MCF 10A (cell line): ENCODE measurements at regions of chr12 and their contacts with region 1.

Region 1: DNA sequence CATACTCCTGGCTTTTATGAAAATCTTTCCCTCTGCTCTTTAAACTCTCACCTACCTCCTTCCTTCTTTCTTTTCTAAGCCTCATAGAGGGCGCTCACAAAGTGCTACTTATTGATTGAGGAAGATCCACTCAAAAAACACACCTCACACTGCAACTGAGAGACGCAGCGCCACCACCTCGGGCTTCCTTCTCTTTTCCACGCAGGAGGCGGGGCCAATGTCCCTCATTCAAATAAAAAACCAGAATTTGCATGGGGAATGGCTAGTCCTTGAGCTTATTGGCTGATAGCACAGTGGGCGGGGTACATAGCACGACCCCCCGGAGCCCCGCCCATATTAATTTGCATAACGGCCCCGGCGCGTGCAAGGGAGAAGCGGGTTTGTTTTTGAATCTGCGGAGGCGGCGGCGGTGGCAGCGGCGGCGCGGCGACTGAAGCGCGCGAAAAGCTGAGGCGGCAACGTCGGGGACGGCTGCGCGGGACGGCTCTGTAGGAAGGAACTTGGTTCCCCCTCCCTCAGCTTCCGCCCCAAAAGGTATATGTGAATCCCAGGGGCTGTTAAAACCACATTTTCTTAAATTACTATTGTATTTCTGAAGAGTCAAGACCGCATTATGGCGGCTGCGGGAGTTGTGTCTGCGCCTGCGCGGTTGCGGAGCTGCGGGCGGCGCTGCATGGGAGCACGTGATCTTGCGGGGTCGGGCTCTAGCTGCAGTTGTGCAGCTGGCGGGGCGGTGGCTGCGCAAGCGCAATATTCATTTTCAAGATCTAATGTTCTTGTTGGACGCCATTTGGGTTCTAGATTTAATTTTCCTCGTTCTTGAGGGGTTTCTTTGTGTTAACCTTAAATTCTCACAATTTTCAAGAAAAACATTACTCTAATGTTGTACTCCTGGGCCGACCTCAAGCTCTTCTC is at the start of gene ATF7IP:
- DNase-seq: peak; percentile 96
- H3K4me3 Mint-ChIP-seq: peak within 1 kb of the TSS; percentile 69
- H3K27ac Mint-ChIP-seq: peak within 1 kb of the TSS; percentile 69
- H3K4me1 Mint-ChIP-seq: no peaks in the 10 kb centered on the region
- H3K27me3 Mint-ChIP-seq: no peaks in the 10 kb centered on the region
- CTCF ChIP-seq: no peak
- total RNA-seq, gene ATF7IP: 29.4 and 33.1 TPM in 2 replicates

Region 2: GRCh38 chr12:14239350-14239934 is 126.1 kb before region 1 on chr12:
- CTCF ChIA-PET with region 1: interaction called, 22 read pairs
- POLR2A ChIA-PET with region 1: interaction called, 31 read pairs
- intact Hi-C with region 1: loop called (anchors 1 kb)
- DNase-seq: no peak
- H3K4me3 Mint-ChIP-seq: no peak overlapping the region
- H3K27ac Mint-ChIP-seq: no peak overlapping the region
- H3K4me1 Mint-ChIP-seq: peaks cover 11% of the 10 kb centered on the region
- H3K27me3 Mint-ChIP-seq: no peaks in the 10 kb centered on the region
- CTCF ChIP-seq: no peak

Region 3: GRCh38 chr12:14272956-14273907 is 92.3 kb before region 1 on chr12:
- CTCF ChIA-PET with region 1: interaction called, 10 read pairs
- POLR2A ChIA-PET with region 1: interaction called, 28 read pairs
- intact Hi-C with region 1: no loop called
- DNase-seq: peak; percentile 94
- H3K4me3 Mint-ChIP-seq: peak overlapping the region; percentile 4
- H3K27ac Mint-ChIP-seq: peak overlapping the region; percentile 86
- H3K4me1 Mint-ChIP-seq: peaks cover 14% of the 10 kb centered on the region
- H3K27me3 Mint-ChIP-seq: no peaks in the 10 kb centered on the region
- CTCF ChIP-seq: no peak

Region 4: DNA sequence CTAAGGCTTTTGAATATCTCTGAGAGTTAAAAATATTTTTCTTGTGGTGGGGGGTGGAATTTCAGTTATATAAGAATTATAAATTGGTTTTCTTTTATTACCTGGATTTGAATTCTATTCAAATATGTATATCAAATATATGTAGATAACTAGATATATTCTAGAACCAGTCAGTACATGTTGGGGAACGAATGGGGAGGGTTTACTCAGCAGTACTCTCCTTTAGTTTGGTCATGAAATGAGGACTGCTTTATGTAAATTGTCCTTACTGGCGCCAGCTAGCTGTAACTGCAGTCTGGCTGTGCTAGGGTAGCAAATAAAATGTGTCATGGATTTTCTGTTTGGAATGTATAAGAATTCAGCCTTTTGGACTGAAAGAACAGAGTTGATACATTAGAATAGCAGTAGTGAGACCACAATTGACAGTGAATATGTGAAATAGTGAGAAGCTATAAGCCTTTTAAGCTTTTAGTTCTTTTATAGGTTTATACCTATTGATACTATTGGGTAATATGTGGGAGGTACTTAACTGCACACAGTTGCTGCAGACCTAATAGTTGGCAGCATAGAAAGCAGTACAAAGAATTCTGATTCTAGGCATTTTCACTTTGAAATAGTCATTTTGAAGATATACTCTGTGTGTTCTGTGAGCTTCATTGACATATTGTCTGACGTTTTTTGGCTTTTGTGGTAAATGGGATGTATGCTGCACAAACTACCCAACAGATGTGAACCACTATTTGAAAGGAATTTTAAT is 28.9 kb after region 1 on chr12:
- CTCF ChIA-PET with region 1: interaction called, 4 read pairs
- POLR2A ChIA-PET with region 1: interaction called, 36 read pairs
- intact Hi-C with region 1: loop called (anchors 2 kb)
- DNase-seq: peak; percentile 77
- H3K4me3 Mint-ChIP-seq: peak overlapping the region; percentile 52
- H3K27ac Mint-ChIP-seq: peak overlapping the region; percentile 82
- H3K4me1 Mint-ChIP-seq: peaks cover 18% of the 10 kb centered on the region
- H3K27me3 Mint-ChIP-seq: no peaks in the 10 kb centered on the region
- CTCF ChIP-seq: no peak

Region 5: GRCh38 chr12:14454098-14454907 is 88.8 kb after region 1 on chr12:
- CTCF ChIA-PET with region 1: no interaction called
- POLR2A ChIA-PET with region 1: interaction called, 6 read pairs
- intact Hi-C with region 1: loop called (anchors 1 kb)
- DNase-seq: peak; percentile 55
- H3K4me3 Mint-ChIP-seq: no peak overlapping the region
- H3K27ac Mint-ChIP-seq: no peak overlapping the region
- H3K4me1 Mint-ChIP-seq: peaks cover 7% of the 10 kb centered on the region
- H3K27me3 Mint-ChIP-seq: no peaks in the 10 kb centered on the region
- CTCF ChIP-seq: peak; percentile 38

Region 6: GRCh38 chr12:14769969-14770495 is 404.5 kb after region 1 on chr12:
- CTCF ChIA-PET with region 1: interaction called, 3 read pairs
- POLR2A ChIA-PET with region 1: interaction called, 20 read pairs
- intact Hi-C with region 1: loop called (anchors 5 kb)
- DNase-seq: peak; percentile 81
- H3K4me3 Mint-ChIP-seq: peak overlapping the region; percentile 98
- H3K27ac Mint-ChIP-seq: peak overlapping the region; percentile 98
- H3K4me1 Mint-ChIP-seq: peaks cover 11% of the 10 kb centered on the region
- H3K27me3 Mint-ChIP-seq: no peaks in the 10 kb centered on the region
- CTCF ChIP-seq: peak; percentile 62